ENCODE measurements at regions of chr12 and their contacts with region 1.

Region 1: GRCh38 chr12:98490501-98491453 is 24.6 kb upstream of the TMPO start:
- DNase-seq: peak; percentile 89
- H3K4me3 Mint-ChIP-seq: peak overlapping the region; percentile 55
- H3K27ac Mint-ChIP-seq: peak overlapping the region; percentile 84
- H3K4me1 Mint-ChIP-seq: peaks cover 5% of the 10 kb centered on the region
- H3K27me3 Mint-ChIP-seq: no peaks in the 10 kb centered on the region

Region 2: DNA sequence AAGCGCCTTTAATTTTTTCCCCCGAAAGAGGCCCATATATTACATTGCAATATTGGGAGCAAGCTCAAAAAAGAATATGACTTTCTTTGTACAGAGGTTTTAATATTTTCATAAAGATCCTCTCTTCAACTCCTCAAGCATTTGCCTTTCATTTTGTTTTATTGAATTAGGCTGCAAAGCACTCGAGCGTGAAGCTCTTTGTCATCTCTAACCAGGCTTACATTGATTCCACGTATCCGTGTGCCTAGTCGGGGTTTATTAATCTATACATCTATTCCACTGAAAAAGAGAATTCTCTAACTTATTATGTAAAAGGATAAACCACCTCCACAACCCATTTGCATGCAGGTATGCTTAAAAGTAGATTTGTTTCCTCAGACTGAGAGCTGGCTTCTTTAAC is 210.2 kb before region 1 on chr12:
- CTCF ChIA-PET with region 1: no interaction called
- POLR2A ChIA-PET with region 1: no interaction called
- intact Hi-C with region 1: no loop called
- DNase-seq: no peak
- H3K4me3 Mint-ChIP-seq: no peak overlapping the region
- H3K27ac Mint-ChIP-seq: no peak overlapping the region
- H3K4me1 Mint-ChIP-seq: no peaks in the 10 kb centered on the region
- H3K27me3 Mint-ChIP-seq: peaks cover 6% of the 10 kb centered on the region

Region 3: DNA sequence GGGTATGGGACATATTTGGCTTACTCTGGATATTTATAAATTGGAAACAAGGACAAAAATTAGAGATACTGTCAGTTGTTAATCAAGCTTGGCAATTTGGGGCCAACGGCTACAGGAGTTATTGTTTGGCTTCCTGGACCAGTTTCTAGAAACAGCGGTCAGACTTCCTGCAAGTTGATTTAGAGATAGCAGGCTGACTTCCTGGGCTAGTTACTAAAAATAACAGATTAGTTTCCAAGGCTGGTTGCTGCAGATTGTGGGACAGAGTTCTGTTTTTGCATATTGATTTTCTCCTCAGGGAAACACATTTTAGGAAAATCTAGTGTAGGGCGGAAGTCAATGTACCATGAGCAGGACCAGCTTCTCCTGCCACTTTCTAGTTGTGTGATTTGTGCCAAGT is 119.4 kb before region 1 on chr12:
- CTCF ChIA-PET with region 1: no interaction called
- POLR2A ChIA-PET with region 1: no interaction called
- intact Hi-C with region 1: no loop called
- DNase-seq: no peak
- H3K4me3 Mint-ChIP-seq: no peak overlapping the region
- H3K27ac Mint-ChIP-seq: no peak overlapping the region
- H3K4me1 Mint-ChIP-seq: peaks cover 10% of the 10 kb centered on the region
- H3K27me3 Mint-ChIP-seq: peaks cover 12% of the 10 kb centered on the region

Region 4: DNA sequence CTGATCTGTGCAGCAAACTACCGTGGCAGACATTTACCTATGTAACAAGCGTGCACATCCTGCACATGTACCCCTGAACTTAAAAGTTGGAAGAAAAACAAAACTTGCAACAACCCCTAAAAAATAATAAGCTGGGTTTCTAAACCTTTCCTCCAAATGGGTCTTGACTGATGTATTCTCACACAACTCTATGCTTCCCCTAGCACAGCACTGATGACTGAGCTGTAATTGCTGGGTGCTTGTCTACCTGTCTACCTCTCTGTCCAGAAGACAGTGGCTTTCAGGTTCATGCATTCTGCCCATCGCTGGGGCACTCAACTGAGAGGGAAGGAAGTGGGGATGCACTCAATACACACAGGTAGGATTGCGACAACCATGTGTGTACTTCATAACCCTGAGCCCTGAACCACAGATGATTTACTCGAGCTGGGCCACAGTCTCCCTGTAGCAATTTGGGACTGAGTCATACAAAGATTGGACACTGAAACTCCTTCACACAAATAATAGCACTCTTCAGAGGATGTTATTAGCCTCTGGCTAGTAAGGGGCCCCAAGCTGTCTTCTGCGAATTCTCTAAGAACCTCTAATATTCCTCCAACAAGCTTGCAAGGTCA is 20.2 kb before region 1 on chr12:
- CTCF ChIA-PET with region 1: interaction called, 16 read pairs
- POLR2A ChIA-PET with region 1: no interaction called
- intact Hi-C with region 1: no loop called
- DNase-seq: no peak
- H3K4me3 Mint-ChIP-seq: no peak overlapping the region
- H3K27ac Mint-ChIP-seq: no peak overlapping the region
- H3K4me1 Mint-ChIP-seq: peaks cover 19% of the 10 kb centered on the region
- H3K27me3 Mint-ChIP-seq: peaks cover 4% of the 10 kb centered on the region

Region 5: DNA sequence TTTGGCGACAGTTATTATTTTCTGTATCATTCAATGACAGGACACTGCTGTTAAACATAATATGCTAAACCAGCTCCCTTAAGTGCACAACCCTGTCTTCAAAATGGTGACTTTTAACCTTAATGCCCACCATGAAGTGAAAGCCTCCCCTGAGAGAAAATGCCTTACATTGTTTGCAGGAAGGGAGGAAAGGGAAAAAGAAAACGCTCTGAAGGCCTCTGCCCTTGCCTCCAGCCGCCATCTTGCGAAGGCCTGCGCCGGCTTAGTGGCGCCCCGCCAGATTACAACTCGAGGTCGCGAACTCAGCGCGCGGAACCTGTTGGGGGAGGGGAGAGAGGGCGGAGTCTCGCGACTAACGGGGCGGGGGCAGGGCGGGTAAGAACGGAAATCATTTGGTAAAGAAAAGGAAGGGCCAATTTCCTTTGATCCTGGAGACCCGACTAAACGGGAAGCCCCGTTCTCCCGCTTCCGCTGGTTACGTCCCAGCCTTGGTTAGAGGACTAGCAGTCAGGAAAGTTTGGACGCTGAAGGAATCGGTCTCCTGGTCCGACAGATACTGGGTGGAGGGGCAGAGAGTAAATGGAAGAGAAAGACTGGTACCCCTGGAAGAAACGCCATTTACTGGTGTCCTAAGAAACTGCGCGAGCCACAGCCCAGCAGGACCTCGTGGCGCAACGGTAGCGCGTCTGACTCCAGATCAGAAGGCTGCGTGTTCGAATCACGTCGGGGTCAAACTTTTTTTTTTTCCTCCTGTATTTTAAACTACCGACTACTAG is 13.0 kb after region 1 on chr12:
- CTCF ChIA-PET with region 1: interaction called, 34 read pairs
- POLR2A ChIA-PET with region 1: interaction called, 7 read pairs
- intact Hi-C with region 1: loop called (anchors 1 kb)
- DNase-seq: peak; percentile 97
- H3K4me3 Mint-ChIP-seq: peak overlapping the region; percentile 86
- H3K27ac Mint-ChIP-seq: peak overlapping the region; percentile 99
- H3K4me1 Mint-ChIP-seq: peaks cover 39% of the 10 kb centered on the region
- H3K27me3 Mint-ChIP-seq: peaks cover 9% of the 10 kb centered on the region

Region 6: GRCh38 chr12:98544751-98545150 is 54.0 kb after region 1 on chr12:
- CTCF ChIA-PET with region 1: interaction called, 3 read pairs
- POLR2A ChIA-PET with region 1: no interaction called
- intact Hi-C with region 1: loop called (anchors 2 kb)
- DNase-seq: no peak
- H3K4me3 Mint-ChIP-seq: no peak overlapping the region
- H3K27ac Mint-ChIP-seq: no peak overlapping the region
- H3K4me1 Mint-ChIP-seq: peaks cover 19% of the 10 kb centered on the region
- H3K27me3 Mint-ChIP-seq: no peaks in the 10 kb centered on the region

Region 7: DNA sequence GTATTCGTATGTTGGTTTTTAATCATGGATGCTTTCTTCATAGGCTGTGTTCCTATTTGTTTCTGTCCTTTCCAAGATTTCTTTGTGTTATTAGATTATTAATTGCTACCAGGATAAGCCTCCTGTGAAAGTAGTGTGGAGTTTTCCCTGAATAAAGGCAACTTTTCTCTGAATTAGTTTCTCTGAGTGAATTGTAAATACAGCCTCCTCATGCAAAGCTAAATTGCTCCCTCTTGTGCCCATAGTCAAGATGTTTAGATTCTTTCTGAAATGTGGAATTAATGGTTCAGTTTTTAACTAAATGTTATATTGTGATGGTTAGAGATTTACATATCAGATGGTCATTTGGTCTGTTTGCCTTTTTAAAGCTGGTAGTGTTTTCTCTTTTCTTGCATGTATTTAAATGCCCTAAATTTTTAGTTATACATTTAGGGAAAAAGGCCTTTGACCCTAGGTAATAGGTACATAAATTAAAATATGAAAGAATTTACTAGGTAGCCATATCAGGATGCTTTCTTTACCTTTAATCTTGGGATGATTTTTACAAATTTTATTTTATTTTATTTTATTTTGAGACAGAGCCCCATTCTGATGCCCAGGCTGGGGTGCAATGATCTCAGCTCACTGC is 163.2 kb after region 1 on chr12:
- CTCF ChIA-PET with region 1: no interaction called
- POLR2A ChIA-PET with region 1: no interaction called
- intact Hi-C with region 1: loop called (anchors 1 kb)
- DNase-seq: no peak
- H3K4me3 Mint-ChIP-seq: no peak overlapping the region
- H3K27ac Mint-ChIP-seq: no peak overlapping the region
- H3K4me1 Mint-ChIP-seq: peaks cover 14% of the 10 kb centered on the region
- H3K27me3 Mint-ChIP-seq: no peaks in the 10 kb centered on the region

Measured in activated CD4-positive, alpha-beta memory T cell treated with anti-CD3 and anti-CD28 coated beads for 36 hours (primary cell).